Activated CD4-positive, alpha-beta memory T cell treated with anti-CD3 and anti-CD28 coated beads for 36 hours (primary cell): ENCODE measurements at regions of chr5 and their contacts with region 1.

Region 1: GRCh38 chr5:132386644-132387286 is 17.3 kb downstream of the SLC22A5 start:
- DNase-seq: peak; percentile 87
- H3K4me3 Mint-ChIP-seq: no peak overlapping the region
- H3K27ac Mint-ChIP-seq: peak overlapping the region; percentile 14
- H3K4me1 Mint-ChIP-seq: peaks cover 42% of the 10 kb centered on the region
- H3K27me3 Mint-ChIP-seq: no peaks in the 10 kb centered on the region

Region 2: DNA sequence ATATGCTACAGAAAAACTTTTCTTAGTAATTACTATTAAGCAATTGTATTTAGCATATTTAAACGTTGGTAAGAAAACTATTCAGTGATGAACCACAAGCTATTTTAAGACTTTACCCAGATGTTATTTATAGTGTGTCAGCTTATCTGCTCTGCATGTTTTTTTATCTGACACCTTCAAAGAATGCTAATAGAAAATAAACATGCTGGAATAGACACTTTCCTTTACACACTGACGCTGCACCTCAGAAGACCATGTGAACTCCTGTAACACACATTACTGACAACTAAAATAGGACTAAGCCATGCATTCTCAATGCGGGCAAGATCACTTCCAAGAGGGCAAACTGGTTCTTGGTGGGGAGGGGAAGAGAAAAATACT is 628.3 kb before region 1 on chr5:
- CTCF ChIA-PET with region 1: no interaction called
- POLR2A ChIA-PET with region 1: no interaction called
- intact Hi-C with region 1: no loop called
- DNase-seq: no peak
- H3K4me3 Mint-ChIP-seq: no peak overlapping the region
- H3K27ac Mint-ChIP-seq: no peak overlapping the region
- H3K4me1 Mint-ChIP-seq: peaks cover 27% of the 10 kb centered on the region
- H3K27me3 Mint-ChIP-seq: no peaks in the 10 kb centered on the region

Region 3: GRCh38 chr5:132473019-132473531 is 86.3 kb after region 1 on chr5:
- CTCF ChIA-PET with region 1: interaction called, 25 read pairs
- POLR2A ChIA-PET with region 1: interaction called, 3 read pairs
- intact Hi-C with region 1: no loop called
- DNase-seq: peak; percentile 90
- H3K4me3 Mint-ChIP-seq: peak overlapping the region; percentile 7
- H3K27ac Mint-ChIP-seq: peak overlapping the region; percentile 91
- H3K4me1 Mint-ChIP-seq: peaks cover 75% of the 10 kb centered on the region
- H3K27me3 Mint-ChIP-seq: no peaks in the 10 kb centered on the region

Region 4: GRCh38 chr5:132673939-132674630 is 287.3 kb after region 1 on chr5 and contains the start of gene IL4:
- CTCF ChIA-PET with region 1: no interaction called
- POLR2A ChIA-PET with region 1: no interaction called
- intact Hi-C with region 1: no loop called
- DNase-seq: no peak
- H3K4me3 Mint-ChIP-seq: peak within 1 kb of the TSS; percentile 44
- H3K27ac Mint-ChIP-seq: peak within 1 kb of the TSS; percentile 73
- H3K4me1 Mint-ChIP-seq: peaks cover 27% of the 10 kb centered on the region
- H3K27me3 Mint-ChIP-seq: no peaks in the 10 kb centered on the region
- total RNA-seq, gene IL4: 6.4 to 6.8 TPM